Dorsolateral prefrontal cortex (tissue), 120 donors: ENCODE measurements at regions of chr15 and their contacts with region 1.

Region 1: DNA sequence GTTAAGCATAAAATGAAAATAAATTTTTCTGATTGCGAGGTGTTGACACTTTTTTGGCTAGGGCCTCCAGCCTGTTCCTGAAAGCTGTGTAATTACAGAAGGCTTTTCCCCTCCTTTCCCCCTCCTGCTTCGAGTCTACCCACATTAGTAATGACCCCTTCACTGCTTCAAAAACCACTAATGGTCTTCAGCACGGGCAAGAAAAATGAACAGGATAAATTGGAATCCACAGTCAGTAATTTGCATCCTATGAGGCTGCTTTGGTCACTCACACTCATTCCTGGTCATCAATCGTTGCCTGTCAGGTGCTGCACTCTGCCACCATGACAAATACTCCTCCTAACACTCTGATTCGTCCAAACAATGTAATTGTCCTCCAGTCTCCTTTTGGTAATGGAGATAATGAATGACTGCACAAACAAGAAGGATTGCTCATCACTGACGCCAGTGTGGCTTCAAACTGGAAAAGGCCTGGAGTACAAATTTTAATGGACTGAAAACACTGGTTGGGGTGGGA is 148.6 kb downstream of the MEIS2 start:
- DNase-seq: no peak
- H3K4me3 ChIP-seq: no peak overlapping the region
- H3K27ac ChIP-seq: no peak overlapping the region
- H3K27me3 ChIP-seq: no peaks in the 10 kb centered on the region
- CTCF ChIP-seq: no peak

Region 2: GRCh38 chr15:36903922-36904556 is 47.8 kb before region 1 on chr15:
- intact Hi-C with region 1: loop called in 1 of 2 experiments (anchors 5 kb)
- DNase-seq: no peak
- H3K4me3 ChIP-seq: no peak overlapping the region
- H3K27ac ChIP-seq: no peak overlapping the region
- H3K27me3 ChIP-seq: peaks cover 0 to 4% (median 0%) of the 10 kb centered on the region in 45 donors
- CTCF ChIP-seq: no peak